ENCODE measurements at regions of chr13 and their contacts with region 1.

Region 1: DNA sequence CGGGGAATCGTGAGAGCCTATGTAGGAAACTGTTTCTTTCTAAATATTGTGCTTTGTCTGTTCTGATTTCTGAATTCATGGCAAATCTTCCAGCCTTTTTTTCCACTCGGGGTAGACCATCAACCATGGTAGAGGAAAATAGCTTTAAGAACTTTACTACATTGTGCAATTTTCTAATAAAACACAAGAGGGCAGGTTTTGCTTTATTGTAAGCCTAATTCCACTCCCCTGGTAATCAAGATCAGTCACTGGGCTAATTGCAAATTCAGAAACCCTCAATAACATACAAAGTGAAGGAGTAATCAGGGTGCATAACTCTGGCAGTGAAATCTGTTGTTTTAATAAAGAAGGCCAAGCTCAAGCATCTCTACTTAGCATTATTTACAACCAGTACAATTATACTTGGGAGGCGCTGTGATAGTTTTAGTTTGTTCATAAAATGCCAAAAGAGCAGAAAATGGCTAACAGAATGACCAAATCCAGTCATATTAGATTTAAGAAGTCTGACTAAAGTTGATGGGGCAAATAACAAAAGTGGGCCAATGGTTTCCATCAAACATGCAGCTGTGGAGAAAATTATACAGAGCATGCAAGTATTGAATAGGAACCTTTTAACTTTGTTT is 43.8 kb downstream of the DCT start:
- ATAC-seq: peak; percentile 20 to 85 (median 51)
- H3K4me3 ChIP-seq: no peak overlapping the region
- H3K27ac ChIP-seq: no peak overlapping the region
- H3K4me1 ChIP-seq: peaks cover 17 to 18% of the 10 kb centered on the region in 2 donors

Region 2: GRCh38 chr13:94549232-94550061 is 113.7 kb after region 1 on chr13:
- in situ Hi-C with region 1: loop called in 1 of 9 experiments (anchors 25 kb)
- ATAC-seq: peak; percentile 84 to 93 (median 91)
- H3K4me3 ChIP-seq: peak overlapping the region; percentile 44 to 75 (median 45)
- H3K27ac ChIP-seq: peak overlapping the region; percentile 80 to 96
- H3K4me1 ChIP-seq: peaks cover 16 to 17% of the 10 kb centered on the region in 2 donors

Region 3: DNA sequence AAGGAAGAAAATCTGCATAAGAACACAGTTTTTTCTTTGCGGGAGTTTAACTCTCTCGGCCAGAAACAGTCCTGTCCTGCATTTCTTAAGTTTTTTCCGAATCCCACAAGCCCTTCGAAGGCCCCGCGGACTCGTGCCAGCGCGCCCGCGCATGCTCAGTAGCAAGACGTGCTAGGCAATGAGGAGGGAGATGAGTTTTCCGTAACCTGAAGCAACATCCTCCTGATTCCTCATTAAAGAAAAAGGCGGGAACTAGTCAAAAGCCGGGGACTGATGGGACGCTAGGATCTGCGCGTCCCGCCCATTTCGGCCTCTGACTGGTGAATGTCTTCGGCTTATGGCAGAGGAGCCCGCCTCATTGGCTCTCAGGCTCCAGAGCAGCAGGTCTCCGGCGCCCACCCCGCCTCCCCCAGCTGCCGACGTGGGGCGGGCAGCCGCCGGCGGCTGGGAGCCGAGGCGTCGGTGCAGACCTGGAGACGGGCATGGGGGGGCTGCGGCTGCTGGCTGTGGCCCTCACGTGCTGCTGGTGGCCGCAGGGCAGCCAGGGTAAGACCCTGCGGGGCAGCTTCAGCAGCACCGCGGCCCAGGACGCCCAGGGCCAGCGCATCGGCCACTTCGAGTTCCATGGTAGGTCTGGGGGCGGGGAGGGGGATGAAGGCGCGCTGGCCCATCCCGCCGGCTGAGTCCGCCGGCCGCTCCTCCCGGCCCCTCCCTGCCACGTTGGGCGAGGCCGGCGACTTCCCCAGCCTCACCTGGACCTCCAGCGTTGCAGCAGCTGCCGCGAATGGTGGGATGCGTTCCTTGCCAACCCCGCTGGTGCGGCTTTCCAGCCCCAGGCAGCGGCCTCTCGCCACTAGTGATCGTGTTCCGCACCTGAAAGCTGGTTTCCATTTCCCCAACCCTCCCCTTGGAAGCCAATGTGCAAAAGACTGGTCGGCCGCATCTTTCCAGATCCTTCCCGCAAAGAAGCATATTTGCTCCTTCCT is 166.0 kb after region 1 on chr13 and contains the start of gene GPR180:
- in situ Hi-C with region 1: loop called in 4 of 9 experiments (anchors 25 kb)
- ATAC-seq: peak; percentile 96 to 99 (median 98)
- H3K4me3 ChIP-seq: peak within 1 kb of the TSS; percentile 52 to 93 (median 62)
- H3K27ac ChIP-seq: peak within 1 kb of the TSS; percentile 74 to 85
- H3K4me1 ChIP-seq: peaks cover 8 to 11% of the 10 kb centered on the region in 2 donors
- total RNA-seq, gene GPR180: 2.3 to 8.6 (median 6.5) TPM

Region 4: DNA sequence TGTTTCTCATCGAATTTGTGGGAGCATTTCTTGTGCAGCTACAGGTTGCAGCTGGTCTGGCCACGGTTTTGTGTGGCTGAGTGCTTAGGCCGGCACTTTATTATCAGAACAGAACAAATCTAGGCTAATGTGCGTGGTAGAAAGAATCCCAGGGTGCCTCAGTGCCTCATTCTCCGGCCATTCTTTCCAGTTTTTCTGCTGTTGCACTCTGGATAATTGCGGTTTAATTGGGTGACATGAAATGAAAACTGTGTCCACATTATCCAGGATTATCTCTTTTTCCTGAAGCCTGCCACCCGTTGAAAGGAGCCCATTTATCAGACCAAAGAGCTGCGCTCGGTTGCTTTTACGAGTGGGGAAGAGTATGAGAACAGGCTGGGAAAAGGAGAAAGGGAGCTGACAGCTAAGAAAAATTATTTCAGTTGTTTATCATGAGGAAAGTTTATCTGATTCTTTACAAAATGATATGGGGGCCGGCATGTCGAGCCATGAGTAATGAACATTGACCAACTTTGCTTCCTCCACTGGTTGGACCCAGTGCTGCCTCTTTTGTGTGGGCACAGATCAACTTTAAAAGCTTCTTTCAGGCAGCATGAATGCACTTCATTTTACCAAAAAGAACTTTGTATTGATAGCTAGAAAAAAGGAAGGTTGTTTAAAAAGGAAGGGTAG is 393.6 kb after region 1 on chr13:
- in situ Hi-C with region 1: no loop called
- ATAC-seq: peak in 5 of 8 experiments; percentile 54 to 79 (median 73)
- H3K4me3 ChIP-seq: no peak overlapping the region
- H3K27ac ChIP-seq: no peak overlapping the region
- H3K4me1 ChIP-seq: peaks cover 16 to 29% of the 10 kb centered on the region in 2 donors

Region 5: DNA sequence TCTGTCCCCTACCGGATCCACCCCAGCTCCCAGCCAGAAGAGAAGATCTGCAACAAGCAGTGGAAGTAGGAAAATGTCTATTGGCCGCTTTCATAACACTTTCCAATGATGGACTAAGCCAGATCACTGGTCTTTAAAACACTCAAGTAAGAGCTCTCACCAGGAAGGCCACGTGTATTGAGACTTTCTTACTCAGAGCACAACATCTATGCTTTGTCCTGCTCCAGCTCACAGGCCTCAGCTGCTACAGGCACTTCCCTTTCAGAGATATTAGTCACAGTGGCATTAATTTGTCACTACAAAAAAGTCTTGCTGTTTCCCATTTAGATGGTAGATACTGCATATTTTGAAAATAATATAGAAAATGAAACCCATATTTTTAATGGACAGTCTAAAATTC is 701.4 kb after region 1 on chr13:
- in situ Hi-C with region 1: loop called in 1 of 9 experiments (anchors 25 kb)
- ATAC-seq: peak in 2 of 8 experiments; percentile 16 to 45
- H3K4me3 ChIP-seq: no peak overlapping the region
- H3K27ac ChIP-seq: no peak overlapping the region
- H3K4me1 ChIP-seq: no peaks in the 10 kb centered on the region

Measured in motor neuron (in vitro differentiated cells).